Posterior cingulate gyrus (tissue), 11 donors: ENCODE measurements at regions of chr15 and their contacts with region 1.

Region 1: GRCh38 chr15:65054333-65055200 is 9.4 kb downstream of the SLC51B start:
- DNase-seq: peak; percentile 54 to 96 (median 79)

Region 2: GRCh38 chr15:65077981-65078352 is 23.4 kb after region 1 on chr15:
- intact Hi-C with region 1: loop called (anchors 1 kb)
- DNase-seq: peak in 3 of 10 donors; percentile 48 to 93 (median 86)

Region 3: DNA sequence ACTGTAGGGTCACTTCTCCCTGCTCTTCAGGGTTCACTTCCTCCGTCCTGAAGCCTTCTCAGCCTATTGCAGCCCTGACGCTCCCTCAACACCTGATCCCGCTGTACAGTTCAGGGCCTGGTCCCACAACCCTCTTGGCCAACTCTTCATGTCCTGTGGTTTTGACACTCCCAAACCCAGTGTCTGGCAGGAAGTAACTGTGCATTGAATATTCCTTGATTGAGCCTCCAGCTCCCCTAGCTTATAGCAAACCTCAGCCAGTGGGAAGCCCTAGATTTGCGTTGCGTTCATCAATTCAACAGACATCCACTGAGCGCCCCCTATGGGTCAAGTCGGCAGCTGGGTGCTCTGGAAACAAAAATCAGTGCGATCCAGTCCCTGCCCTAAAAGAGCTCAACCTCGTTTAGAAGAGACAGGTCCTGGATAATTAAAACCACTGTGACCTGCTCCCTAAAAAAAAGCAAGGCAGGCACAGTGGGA is 46.9 kb after region 1 on chr15:
- intact Hi-C with region 1: loop called (anchors 1 kb)
- DNase-seq: peak in 8 of 10 donors; percentile 59 to 93 (median 74)

Region 4: DNA sequence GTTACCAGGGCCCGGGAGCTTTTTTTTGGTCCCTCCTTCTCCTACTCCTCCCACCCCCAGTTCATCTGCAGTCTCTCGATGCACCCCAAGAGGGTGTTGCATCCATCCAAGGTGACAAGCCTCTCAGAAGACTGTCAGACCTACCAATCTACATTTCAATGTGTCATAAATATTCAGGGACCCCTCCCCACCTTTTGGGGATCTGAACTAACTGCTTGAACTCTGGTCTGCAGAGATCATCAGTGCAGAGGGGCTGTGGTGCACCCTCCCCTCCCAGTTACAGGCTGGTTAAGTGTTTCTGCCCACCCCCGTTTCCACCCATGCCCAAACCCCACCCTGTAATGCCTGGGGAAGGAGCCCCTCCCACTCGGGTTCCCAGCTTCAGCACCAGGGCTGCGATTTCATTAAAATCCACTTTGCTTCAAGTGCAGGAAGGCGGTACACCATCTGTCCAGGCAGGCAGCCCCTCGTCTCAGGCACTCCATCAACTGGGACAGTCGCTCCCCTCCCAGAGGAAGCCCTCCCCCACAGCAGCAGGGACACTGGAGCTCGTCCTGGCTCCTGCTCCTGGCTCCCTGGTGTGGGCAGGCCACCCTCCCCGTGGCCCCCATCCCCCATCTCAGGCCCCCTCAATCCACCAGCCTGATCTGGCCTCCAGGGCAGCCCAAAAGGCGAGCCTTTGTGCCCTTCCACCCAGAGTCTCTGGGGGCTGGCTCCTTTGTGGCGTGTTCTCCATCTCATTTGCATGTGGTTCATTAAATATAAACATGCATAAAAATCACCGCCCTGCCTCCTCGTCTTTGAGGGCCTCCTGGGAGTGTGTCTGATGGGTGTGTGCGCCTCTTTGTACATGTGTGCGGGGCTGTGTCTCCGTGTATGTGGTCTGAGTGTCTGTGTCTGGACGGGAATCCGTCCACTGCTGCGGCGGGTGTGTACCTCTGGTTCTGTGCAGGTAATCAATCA is 282.2 kb after region 1 on chr15:
- intact Hi-C with region 1: no loop called
- DNase-seq: peak in 3 of 10 donors; percentile 28 to 61 (median 36)